H1 (cell line): ENCODE measurements at regions of chr11 and their contacts with region 1.

Region 1: DNA sequence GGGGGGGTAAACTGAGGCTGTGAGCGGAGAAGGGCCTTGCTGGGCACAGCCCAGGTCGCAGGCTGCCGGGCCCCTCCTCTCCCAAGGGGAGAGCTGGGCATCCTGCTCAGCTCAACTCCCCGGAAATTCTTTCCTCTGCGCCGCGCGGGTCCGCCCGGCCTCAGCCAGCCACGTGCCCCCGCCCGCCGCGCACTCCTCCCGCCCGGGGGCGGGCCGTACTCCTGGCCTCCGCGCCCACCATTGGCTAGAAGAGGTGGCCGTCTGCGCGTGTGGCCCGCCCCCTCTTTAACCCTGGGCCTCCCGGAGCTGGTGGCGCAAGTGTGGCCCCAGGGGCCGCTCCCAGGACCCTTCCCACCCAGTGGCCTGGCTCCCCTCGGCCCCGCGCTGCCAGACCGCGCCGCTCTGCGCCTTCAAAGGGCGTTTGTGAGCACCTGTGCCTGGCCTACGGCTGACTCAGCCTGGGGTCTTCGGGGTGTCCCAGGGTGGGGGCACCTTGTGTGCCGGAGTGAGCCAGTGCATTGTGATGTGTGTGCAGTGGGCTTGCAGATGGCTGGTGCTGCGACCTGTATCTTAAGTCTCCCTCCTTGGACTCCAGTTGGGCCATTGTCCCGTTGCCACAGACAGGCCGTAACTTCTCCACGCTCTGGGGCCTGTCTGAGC is 2.0 kb downstream of the MRGPRF start:
- DNase-seq: peak; percentile 38 to 88
- H3K4me3 ChIP-seq: peak overlapping the region; percentile 7 to 50 (median 22); a peak in 5 of 8 replicates
- H3K27ac ChIP-seq: no peak overlapping the region
- H3K4me1 ChIP-seq: peaks cover 9 to 45% (median 32%) of the 10 kb centered on the region in 4 experiments
- H3K27me3 ChIP-seq: peaks cover 0 to 4% (median 0%) of the 10 kb centered on the region in 4 experiments; a peak in 4 of 7 replicates
- CTCF ChIP-seq: no peak
- EP300 ChIP-seq: no peak
- POLR2A ChIP-seq: no peak
- RAD21 ChIP-seq: no peak

Region 2: GRCh38 chr11:68956142-68956541 is 55.0 kb before region 1 on chr11:
- CTCF ChIA-PET with region 1: interaction called, 11 read pairs
- POLR2A ChIA-PET with region 1: no interaction called
- DNase-seq: peak in 1 of 2 experiments; percentile 85
- H3K4me3 ChIP-seq: no peak overlapping the region
- H3K27ac ChIP-seq: no peak overlapping the region
- H3K4me1 ChIP-seq: peaks cover 0 to 8% (median 4%) of the 10 kb centered on the region in 4 experiments; a peak in 4 of 7 replicates
- H3K27me3 ChIP-seq: no peaks in the 10 kb centered on the region
- CTCF ChIP-seq: peak; percentile 65 to 73 (median 73)
- EP300 ChIP-seq: no peak
- POLR2A ChIP-seq: no peak
- RAD21 ChIP-seq: peak; percentile 33 to 56; a peak in 3 of 4 replicates

Region 3: DNA sequence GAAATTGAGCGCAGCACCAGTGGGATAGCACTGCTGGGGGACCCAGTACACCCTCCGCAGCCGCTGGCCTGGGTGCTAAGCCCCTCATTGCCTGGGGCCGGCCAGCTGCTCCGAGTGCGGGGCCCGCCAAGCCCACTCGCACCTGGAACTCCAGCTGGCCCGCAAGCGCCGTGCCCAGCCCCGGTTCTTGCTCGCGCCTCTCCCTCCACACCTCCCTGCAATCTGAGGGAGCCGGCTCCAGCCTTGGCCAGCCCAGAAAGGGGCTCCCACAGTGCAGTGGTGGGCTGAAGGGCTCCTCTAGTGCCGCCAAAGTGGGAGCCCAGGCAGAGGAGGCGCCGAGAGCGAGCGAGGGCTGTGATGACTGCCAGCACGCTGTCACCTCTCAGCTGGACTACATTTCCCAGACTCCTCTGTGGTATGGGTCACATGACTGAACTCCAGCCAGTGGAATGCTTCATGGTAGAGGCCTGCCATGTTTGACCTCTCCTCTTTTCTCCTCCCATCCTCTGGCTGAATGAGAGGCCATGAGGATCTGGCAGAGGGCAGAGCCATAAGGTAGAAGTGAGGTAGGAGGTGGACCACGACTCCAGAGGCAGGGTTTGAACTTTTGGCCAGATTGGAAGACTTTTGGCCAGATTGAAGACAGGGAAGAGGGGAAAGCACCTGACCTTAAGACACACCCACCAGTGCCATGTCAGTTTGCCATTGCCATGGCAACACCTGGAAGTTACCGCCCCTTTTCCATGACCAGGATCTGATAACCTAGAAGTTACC is 36.5 kb before region 1 on chr11:
- CTCF ChIA-PET with region 1: no interaction called
- POLR2A ChIA-PET with region 1: no interaction called
- DNase-seq: peak in 1 of 2 experiments; percentile 63
- H3K4me3 ChIP-seq: no peak overlapping the region
- H3K27ac ChIP-seq: no peak overlapping the region
- H3K4me1 ChIP-seq: peaks cover 0 to 3% (median 1%) of the 10 kb centered on the region in 4 experiments; a peak in 1 of 7 replicates
- H3K27me3 ChIP-seq: no peaks in the 10 kb centered on the region; a peak in 3 of 7 replicates
- CTCF ChIP-seq: no peak
- EP300 ChIP-seq: no peak
- POLR2A ChIP-seq: no peak
- RAD21 ChIP-seq: no peak

Region 4: DNA sequence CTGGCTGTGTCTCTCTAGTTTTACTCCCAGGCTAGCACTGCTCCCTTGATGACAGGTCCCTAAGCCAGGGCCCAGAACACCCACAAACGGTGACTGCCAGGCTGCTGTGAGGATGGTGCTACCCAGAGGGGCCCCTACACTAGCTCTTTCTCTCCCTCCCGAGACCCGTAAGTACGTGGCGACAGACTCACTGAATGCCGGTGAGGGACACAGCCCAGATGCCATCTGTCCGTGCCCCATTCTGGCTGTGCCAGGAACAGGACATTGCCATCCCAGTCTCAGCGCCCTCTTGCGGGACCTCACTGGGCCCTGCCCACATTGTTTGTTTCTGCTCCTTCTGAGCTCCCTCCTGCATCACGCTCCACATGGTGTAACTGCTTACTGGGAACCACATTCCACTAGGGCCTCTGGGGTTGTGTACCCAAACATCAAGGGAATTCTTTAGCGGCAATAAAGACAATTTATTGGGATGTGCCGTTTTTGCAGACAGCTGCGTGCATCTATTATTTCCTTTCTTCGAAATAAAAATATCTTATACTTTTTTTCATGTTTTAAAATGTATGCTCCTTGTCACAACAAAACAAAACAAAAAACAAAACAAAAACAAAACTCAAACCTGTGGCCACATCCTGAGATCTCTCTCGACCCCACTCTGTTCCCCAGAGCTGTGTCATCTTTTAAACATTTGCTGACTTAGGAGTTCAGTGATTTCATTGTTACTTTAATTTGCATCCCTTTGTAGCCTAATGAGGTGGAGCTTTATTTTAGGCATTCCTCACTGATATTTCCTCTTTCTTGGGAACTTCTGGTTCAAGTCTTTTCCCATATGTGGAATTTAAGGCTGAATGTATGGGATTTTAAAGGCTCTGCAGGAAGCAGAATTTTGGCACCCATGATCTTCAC is 33.3 kb after region 1 on chr11:
- CTCF ChIA-PET with region 1: interaction called, 14 read pairs
- POLR2A ChIA-PET with region 1: interaction called, 10 read pairs
- DNase-seq: peak; percentile 64 to 82
- H3K4me3 ChIP-seq: no peak overlapping the region; a peak in 1 of 8 replicates
- H3K27ac ChIP-seq: peak overlapping the region; percentile 1; the same call in 1 of the 2 replicates
- H3K4me1 ChIP-seq: peaks cover 0 to 12% (median 2%) of the 10 kb centered on the region in 4 experiments; a peak in 4 of 7 replicates
- H3K27me3 ChIP-seq: peaks cover 0 to 3% (median 0%) of the 10 kb centered on the region in 4 experiments; a peak in 1 of 7 replicates
- CTCF ChIP-seq: peak; percentile 65 to 87 (median 85)
- EP300 ChIP-seq: peak in 1 of 2 experiments; percentile 43; a peak in 1 of 3 replicates
- POLR2A ChIP-seq: no peak
- RAD21 ChIP-seq: peak; percentile 47 to 58